ENCODE measurements at regions of chr16 and their contacts with region 1.

Region 1: GRCh38 chr16:75198135-75198600 is 8.8 kb downstream of the CTRB2 start:
- DNase-seq: no peak
- H3K4me3 ChIP-seq: no peak overlapping the region
- H3K27ac ChIP-seq: no peak overlapping the region
- H3K4me1 ChIP-seq: no peaks in the 10 kb centered on the region
- H3K27me3 ChIP-seq: no peaks in the 10 kb centered on the region
- CTCF ChIP-seq: no peak

Region 2: DNA sequence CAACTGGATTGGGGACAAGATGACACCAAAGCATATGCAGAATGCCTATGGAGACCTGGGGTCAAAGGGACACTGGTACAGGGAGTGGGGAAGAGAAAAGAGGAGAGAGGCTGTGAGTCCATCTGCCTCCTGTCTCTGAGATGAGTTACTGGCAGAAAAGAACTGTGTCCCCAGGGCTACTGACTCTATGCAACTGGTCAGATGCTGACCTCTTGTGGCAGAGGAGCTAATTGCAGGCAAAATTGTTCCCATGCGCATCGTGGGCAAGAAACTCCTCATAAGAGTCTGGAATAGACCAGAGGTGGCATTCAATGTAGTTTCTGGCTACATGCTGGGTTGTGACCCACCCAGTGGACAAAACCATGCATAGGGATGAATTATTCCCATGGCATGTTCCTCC is 471.5 kb before region 1 on chr16:
- CTCF ChIA-PET with region 1: interaction called, 10 read pairs
- POLR2A ChIA-PET with region 1: no interaction called
- intact Hi-C with region 1: no loop called
- DNase-seq: no peak
- H3K4me3 ChIP-seq: no peak overlapping the region
- H3K27ac ChIP-seq: no peak overlapping the region
- H3K4me1 ChIP-seq: peaks cover 24% of the 10 kb centered on the region
- H3K27me3 ChIP-seq: no peaks in the 10 kb centered on the region
- CTCF ChIP-seq: peak; percentile 73

Region 3: GRCh38 chr16:75385507-75386152 is 187.5 kb after region 1 on chr16:
- CTCF ChIA-PET with region 1: interaction called, 12 read pairs
- POLR2A ChIA-PET with region 1: no interaction called
- intact Hi-C with region 1: loop called (anchors 1 kb)
- DNase-seq: peak in 1 of 2 experiments; percentile 64
- H3K4me3 ChIP-seq: no peak overlapping the region
- H3K27ac ChIP-seq: peak overlapping the region; percentile 20; the same call in 1 of the 2 replicates
- H3K4me1 ChIP-seq: peaks cover 6% of the 10 kb centered on the region
- H3K27me3 ChIP-seq: no peaks in the 10 kb centered on the region
- CTCF ChIP-seq: peak; percentile 87

Region 4: GRCh38 chr16:75402821-75403475 is 204.8 kb after region 1 on chr16:
- CTCF ChIA-PET with region 1: interaction called, 11 read pairs
- POLR2A ChIA-PET with region 1: no interaction called
- intact Hi-C with region 1: loop called (anchors 1 kb)
- DNase-seq: peak; percentile 8 to 44
- H3K4me3 ChIP-seq: no peak overlapping the region
- H3K27ac ChIP-seq: peak overlapping the region; percentile 79
- H3K4me1 ChIP-seq: peaks cover 12% of the 10 kb centered on the region
- H3K27me3 ChIP-seq: no peaks in the 10 kb centered on the region
- CTCF ChIP-seq: peak; percentile 77

Region 5: GRCh38 chr16:75464130-75464918 is 266.2 kb after region 1 on chr16 and contains the start of gene TMEM170A:
- CTCF ChIA-PET with region 1: interaction called, 3 read pairs
- POLR2A ChIA-PET with region 1: no interaction called
- intact Hi-C with region 1: loop called (anchors 10 kb)
- DNase-seq: peak; percentile 91 to 99
- H3K4me3 ChIP-seq: peak within 1 kb of the TSS; percentile 61
- H3K27ac ChIP-seq: peak within 1 kb of the TSS; percentile 45
- H3K4me1 ChIP-seq: peaks cover 18% of the 10 kb centered on the region
- H3K27me3 ChIP-seq: no peaks in the 10 kb centered on the region
- CTCF ChIP-seq: peak; percentile 100
- total RNA-seq, gene TMEM170A: 31.4 and 31.7 TPM in 2 replicates

Region 6: GRCh38 chr16:75764154-75764768 is 566.1 kb after region 1 on chr16:
- CTCF ChIA-PET with region 1: no interaction called
- POLR2A ChIA-PET with region 1: no interaction called
- intact Hi-C with region 1: loop called (anchors 1 kb)
- DNase-seq: peak; percentile 36 to 41
- H3K4me3 ChIP-seq: no peak overlapping the region
- H3K27ac ChIP-seq: no peak overlapping the region
- H3K4me1 ChIP-seq: no peaks in the 10 kb centered on the region
- H3K27me3 ChIP-seq: no peaks in the 10 kb centered on the region
- CTCF ChIP-seq: peak; percentile 77

Region 7: GRCh38 chr16:77171745-77172635 is 1973.8 kb after region 1 on chr16:
- CTCF ChIA-PET with region 1: no interaction called
- POLR2A ChIA-PET with region 1: no interaction called
- intact Hi-C with region 1: loop called (anchors 10 kb)
- DNase-seq: peak; percentile 21 to 56
- H3K4me3 ChIP-seq: no peak overlapping the region
- H3K27ac ChIP-seq: no peak overlapping the region
- H3K4me1 ChIP-seq: no peaks in the 10 kb centered on the region
- H3K27me3 ChIP-seq: peaks cover 36% of the 10 kb centered on the region
- CTCF ChIP-seq: peak; percentile 88

Measured in PC-9 (cell line).